GM12878 (cell line): ENCODE measurements at regions of chr1 and their contacts with region 1.

Region 1: GRCh38 chr1:22704440-22705067 is 6.1 kb upstream of the EPHB2 start:
- DNase-seq: no peak
- ATAC-seq: peak; percentile 99
- H3K4me3 ChIP-seq: no peak overlapping the region
- H3K27ac ChIP-seq: no peak overlapping the region
- H3K4me1 ChIP-seq: peaks cover 9% of the 10 kb centered on the region
- H3K27me3 ChIP-seq: peaks cover 0 to under 1% of the 10 kb centered on the region in 2 experiments; a peak in 1 of 4 replicates
- CTCF ChIP-seq: peak; percentile 83 to 90 (median 88)
- EP300 ChIP-seq: no peak
- POLR2A ChIP-seq: no peak
- RAD21 ChIP-seq: peak; percentile 89

Region 2: GRCh38 chr1:22731924-22732720 is 27.6 kb after region 1 on chr1:
- CTCF ChIA-PET with region 1: interaction called, 42 read pairs
- POLR2A ChIA-PET with region 1: no interaction called
- RAD21 ChIA-PET with region 1: interaction called, 10 read pairs
- SMC1A ChIA-PET with region 1: interaction called, 9 read pairs
- in situ Hi-C with region 1: no loop called
- intact Hi-C with region 1: loop called (anchors 1 kb)
- DNase-seq: no peak
- ATAC-seq: peak; percentile 45; the same call in 2 of the 3 replicates
- H3K4me3 ChIP-seq: no peak overlapping the region
- H3K27ac ChIP-seq: no peak overlapping the region
- H3K4me1 ChIP-seq: no peaks in the 10 kb centered on the region
- H3K27me3 ChIP-seq: no peaks in the 10 kb centered on the region; a peak in 2 of 4 replicates
- CTCF ChIP-seq: peak; percentile 36 to 51 (median 49); a peak in 5 of 6 replicates
- EP300 ChIP-seq: no peak
- POLR2A ChIP-seq: no peak
- RAD21 ChIP-seq: peak; percentile 51

Region 3: DNA sequence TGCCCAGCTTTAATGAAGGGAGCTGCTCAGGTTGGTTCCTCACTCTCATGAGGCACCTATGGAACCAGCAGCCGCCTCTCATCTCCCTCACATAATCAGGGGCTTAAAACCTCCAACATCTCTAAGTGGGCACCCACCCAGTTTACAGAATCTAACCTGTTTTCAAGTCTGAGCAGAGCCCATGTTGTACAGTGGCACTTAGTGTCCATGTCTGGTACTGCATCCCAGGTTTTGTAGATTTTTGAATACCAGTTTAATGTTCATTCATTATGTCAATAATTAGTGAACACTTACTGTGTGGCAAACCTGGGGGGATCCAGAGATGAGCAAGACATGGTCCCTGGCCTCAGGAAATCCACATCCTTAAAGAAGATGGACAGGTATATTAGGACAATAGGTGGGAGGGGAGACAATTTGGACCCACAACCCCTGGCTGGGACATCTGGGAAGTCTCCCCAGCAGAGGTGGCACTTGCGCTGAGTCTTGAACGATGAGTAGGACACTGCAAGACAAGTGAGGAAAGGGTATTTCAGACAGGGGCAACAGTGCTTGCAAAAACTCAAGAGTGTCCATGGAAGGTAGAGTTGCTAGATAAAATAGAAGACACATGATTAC is 184.8 kb after region 1 on chr1:
- CTCF ChIA-PET with region 1: interaction called, 36 read pairs
- POLR2A ChIA-PET with region 1: no interaction called
- RAD21 ChIA-PET with region 1: interaction called, 17 read pairs
- SMC1A ChIA-PET with region 1: interaction called, 19 read pairs
- in situ Hi-C with region 1: loop called (anchors 10 kb)
- intact Hi-C with region 1: loop called (anchors 1 kb)
- DNase-seq: no peak
- ATAC-seq: peak; percentile 74
- H3K4me3 ChIP-seq: no peak overlapping the region
- H3K27ac ChIP-seq: no peak overlapping the region
- H3K4me1 ChIP-seq: no peaks in the 10 kb centered on the region
- H3K27me3 ChIP-seq: no peaks in the 10 kb centered on the region
- CTCF ChIP-seq: peak; percentile 72 to 86 (median 78)
- EP300 ChIP-seq: no peak
- POLR2A ChIP-seq: no peak
- RAD21 ChIP-seq: peak; percentile 81

Region 4: DNA sequence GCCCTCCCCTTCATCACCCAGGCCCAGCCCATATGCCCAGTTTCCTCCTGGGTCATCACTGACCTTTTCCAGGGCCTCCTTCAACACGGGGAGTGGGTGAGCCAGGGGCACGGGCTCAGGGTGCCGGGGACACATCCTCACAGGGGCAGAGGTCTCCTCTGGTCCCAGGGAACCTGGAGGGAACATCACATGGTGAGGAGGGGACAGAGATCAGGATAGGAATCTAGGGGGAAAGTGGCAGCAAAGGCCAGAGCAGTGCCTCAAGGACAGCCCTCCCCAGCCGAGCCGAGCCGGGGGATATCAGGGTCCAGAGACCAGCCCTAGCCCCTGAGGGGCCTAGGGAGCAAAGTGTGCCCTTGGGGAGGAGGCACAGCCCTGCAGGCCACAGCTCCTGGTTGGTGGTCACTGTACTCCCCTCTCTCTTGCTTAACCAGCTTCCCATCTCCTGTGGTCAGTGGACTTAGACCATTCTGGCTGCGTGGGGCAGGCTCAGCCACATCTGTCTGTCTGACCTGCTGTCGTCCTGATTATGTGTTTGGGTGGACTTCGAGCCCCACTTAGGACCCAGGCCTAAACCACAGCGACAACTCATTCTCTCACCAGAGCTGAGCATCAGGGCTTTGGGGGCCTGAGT is 258.6 kb after region 1 on chr1:
- CTCF ChIA-PET with region 1: interaction called, 29 read pairs
- POLR2A ChIA-PET with region 1: no interaction called
- RAD21 ChIA-PET with region 1: interaction called, 8 read pairs
- SMC1A ChIA-PET with region 1: interaction called, 5 read pairs
- in situ Hi-C with region 1: no loop called
- intact Hi-C with region 1: loop called (anchors 1 kb)
- DNase-seq: no peak
- ATAC-seq: no peak
- H3K4me3 ChIP-seq: no peak overlapping the region
- H3K27ac ChIP-seq: no peak overlapping the region
- H3K4me1 ChIP-seq: no peaks in the 10 kb centered on the region
- H3K27me3 ChIP-seq: peaks cover 0 to 1% of the 10 kb centered on the region in 2 experiments; a peak in 2 of 4 replicates
- CTCF ChIP-seq: no peak
- EP300 ChIP-seq: no peak
- POLR2A ChIP-seq: no peak
- RAD21 ChIP-seq: no peak